PC-3 (cell line): ENCODE measurements at regions of chr15 and their contacts with region 1.

Region 1: GRCh38 chr15:68550481-68551295 is 28.1 kb upstream of the CORO2B start:
- DNase-seq: peak; percentile 75
- ATAC-seq: 0 out of 2 replicates have a peak, but pooled peaks have one; percentile 42
- H3K4me3 ChIP-seq: no peak overlapping the region
- H3K27ac ChIP-seq: no peak overlapping the region
- H3K4me1 ChIP-seq: no peaks in the 10 kb centered on the region; the same call in 1 of the 2 replicates
- H3K27me3 ChIP-seq: no peaks in the 10 kb centered on the region; the same call in 1 of the 2 replicates
- CTCF ChIP-seq: peak; percentile 88

Region 2: DNA sequence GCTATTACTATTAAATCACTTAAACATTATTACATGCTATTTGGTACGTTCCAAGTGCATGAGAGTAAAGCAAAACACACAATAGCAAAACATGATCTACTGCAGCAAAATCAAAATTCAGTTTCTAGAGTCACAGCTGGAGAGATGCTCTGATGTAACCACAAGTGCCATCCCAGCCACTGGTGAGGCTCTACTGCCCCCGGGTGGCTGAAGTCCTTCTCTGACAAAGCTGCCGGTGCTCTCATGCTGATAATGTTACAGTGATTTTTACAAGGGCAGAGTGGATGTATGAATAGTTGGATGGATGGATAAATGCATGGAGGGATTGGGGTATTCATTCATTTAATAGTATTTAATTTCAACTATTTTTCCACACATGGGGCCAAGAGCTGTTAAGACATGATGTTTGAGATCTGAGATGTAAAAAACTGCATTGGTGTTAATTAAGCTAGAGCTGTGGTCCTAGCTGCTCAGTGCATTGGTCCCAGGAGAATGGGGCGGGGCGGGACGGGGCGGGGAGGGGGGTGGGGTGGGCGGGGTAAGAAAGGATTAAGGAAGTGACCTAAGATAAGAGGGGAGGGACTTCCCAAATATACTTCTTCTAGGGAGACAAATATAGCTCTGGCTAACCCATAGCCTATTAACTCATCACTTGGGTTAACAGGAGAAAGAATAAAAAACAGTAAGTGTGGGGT is 374.3 kb after region 1 on chr15:
- CTCF ChIA-PET with region 1: no interaction called
- POLR2A ChIA-PET with region 1: no interaction called
- intact Hi-C with region 1: loop called (anchors 5 kb)
- DNase-seq: peak; percentile 86
- ATAC-seq: peak; percentile 87
- H3K4me3 ChIP-seq: no peak overlapping the region
- H3K27ac ChIP-seq: no peak overlapping the region
- H3K4me1 ChIP-seq: no peaks in the 10 kb centered on the region
- H3K27me3 ChIP-seq: no peaks in the 10 kb centered on the region
- CTCF ChIP-seq: peak; percentile 90